GM13976 (cell line): ENCODE measurements at regions of chr1 and their contacts with region 1.

Region 1: GRCh38 chr1:93447516-93448291 is at the start of gene FNBP1L:
- DNase-seq: peak; percentile 75
- CTCF ChIP-seq: no peak

Region 2: DNA sequence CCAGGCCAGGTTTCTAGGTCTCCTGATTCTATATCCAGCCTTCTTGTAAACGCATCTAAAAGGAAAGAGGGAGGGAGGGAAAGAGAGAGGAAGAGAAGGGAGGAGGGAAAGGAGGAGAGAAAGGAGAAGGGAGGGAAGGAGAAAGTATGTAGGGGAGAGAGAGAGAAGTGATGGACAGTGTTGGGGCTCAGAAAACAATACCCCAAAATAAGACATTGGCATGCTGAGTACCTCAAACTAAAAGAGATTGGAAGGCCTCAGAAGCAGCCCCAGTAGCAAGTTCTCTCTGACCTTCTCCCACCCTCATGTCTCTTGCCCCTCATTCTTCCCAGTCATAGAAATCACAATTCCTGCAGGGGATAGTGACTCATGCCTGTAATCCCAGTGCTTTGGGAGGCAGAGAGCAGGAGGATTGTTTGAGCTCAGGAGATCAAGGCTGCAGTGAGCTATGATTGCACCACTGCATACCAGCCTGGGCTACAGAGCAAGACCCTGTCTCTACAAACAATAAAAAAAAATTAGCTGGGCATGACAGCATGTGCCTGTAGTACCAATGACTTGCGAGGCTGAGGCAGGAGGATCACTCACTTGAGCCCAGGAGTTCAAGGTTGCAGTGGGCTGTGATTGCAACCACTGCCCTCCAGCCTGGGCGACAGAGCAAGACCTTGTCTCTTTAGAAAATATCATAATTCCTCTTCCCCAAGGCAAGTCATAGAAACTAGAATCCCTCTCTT is 380.1 kb after region 1 on chr1:
- in situ Hi-C with region 1: loop called (anchors 10 kb)
- DNase-seq: no peak
- CTCF ChIP-seq: no peak